CD4-positive, alpha-beta T cell (primary cell): ENCODE measurements at regions of chr11 and their contacts with region 1.

Region 1: DNA sequence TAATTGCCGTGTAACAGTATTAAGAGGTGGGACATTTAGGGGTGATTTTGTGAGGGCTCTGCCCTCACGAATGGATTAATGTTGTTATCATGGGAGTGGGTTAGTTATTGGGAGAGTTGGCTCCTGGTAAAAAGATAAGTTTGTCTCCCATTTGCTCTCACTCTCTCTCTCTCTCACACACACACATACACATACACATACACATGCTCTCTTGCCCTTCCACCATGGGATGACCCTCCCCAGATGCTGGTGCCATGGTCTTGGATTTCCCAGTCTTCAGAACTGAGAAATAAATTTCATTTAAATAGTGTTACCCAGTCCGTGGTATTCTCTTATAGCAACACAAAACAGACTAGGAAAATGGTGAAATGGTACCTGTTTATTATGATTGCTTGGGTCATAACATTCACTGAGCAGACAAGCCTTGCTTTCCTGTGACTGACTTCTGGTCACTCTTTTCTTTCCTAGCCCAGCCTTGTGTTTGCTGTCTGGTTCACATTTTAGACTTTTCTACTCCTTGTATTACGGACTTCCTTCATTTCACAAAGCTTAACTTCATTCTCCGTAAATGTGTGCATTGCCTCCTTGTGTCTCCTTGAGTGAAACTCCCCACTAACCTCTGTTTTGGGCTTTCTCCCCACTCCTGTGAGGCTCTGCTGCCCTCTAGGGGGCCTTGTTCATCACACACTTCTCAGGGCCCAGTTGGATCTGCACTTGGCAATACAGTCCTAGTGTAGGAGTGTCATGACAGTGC is 206.5 kb upstream of the CTSC start:
- DNase-seq: peak; percentile 59 to 84 (median 67)
- ATAC-seq: peak; percentile 96
- H3K4me3 ChIP-seq: no peak overlapping the region
- H3K4me3 Mint-ChIP-seq: no peak overlapping the region
- H3K27ac ChIP-seq: no peak overlapping the region
- H3K27ac Mint-ChIP-seq: no peak overlapping the region
- H3K4me1 ChIP-seq: peaks cover 5% of the 10 kb centered on the region
- H3K4me1 Mint-ChIP-seq: peaks cover 5% of the 10 kb centered on the region
- H3K27me3 ChIP-seq: no peaks in the 10 kb centered on the region
- H3K27me3 Mint-ChIP-seq: no peaks in the 10 kb centered on the region
- CTCF ChIP-seq: peak; percentile 98

Region 2: DNA sequence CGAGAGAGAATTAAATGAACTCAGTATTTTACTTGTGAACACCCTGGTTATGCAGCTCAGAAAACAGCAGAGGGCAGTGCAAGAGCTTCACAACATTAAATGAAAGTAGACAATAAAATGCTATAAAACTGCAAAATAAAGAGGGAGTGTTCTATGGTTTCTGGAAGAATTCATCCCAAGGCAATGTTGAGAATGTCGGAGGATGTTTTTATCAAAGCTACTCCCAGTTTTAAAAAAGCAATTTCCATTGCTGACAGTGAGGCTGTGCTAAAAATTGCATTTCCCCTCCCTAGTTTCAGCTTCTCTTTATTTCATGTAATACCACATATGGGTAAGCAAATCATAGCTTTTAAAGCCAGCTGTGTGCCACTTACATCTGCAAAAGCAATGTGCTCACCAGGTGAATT is 665.7 kb before region 1 on chr11:
- CTCF ChIA-PET with region 1: no interaction called
- POLR2A ChIA-PET with region 1: no interaction called
- intact Hi-C with region 1: loop called (anchors 2 to 5 kb)
- DNase-seq: peak in 1 of 14 experiments; percentile 6
- ATAC-seq: no peak
- H3K4me3 ChIP-seq: no peak overlapping the region
- H3K4me3 Mint-ChIP-seq: no peak overlapping the region
- H3K27ac ChIP-seq: no peak overlapping the region
- H3K27ac Mint-ChIP-seq: no peak overlapping the region
- H3K4me1 ChIP-seq: no peaks in the 10 kb centered on the region
- H3K4me1 Mint-ChIP-seq: no peaks in the 10 kb centered on the region
- H3K27me3 ChIP-seq: no peaks in the 10 kb centered on the region
- H3K27me3 Mint-ChIP-seq: no peaks in the 10 kb centered on the region
- CTCF ChIP-seq: no peak

Region 3: GRCh38 chr11:88103337-88104206 is 440.5 kb before region 1 on chr11:
- CTCF ChIA-PET with region 1: interaction called, 3 read pairs
- POLR2A ChIA-PET with region 1: no interaction called
- intact Hi-C with region 1: loop called (anchors 1 kb)
- DNase-seq: peak in 7 of 14 experiments; percentile 0 to 61 (median 11)
- ATAC-seq: no peak
- H3K4me3 ChIP-seq: no peak overlapping the region
- H3K4me3 Mint-ChIP-seq: no peak overlapping the region
- H3K27ac ChIP-seq: no peak overlapping the region
- H3K27ac Mint-ChIP-seq: no peak overlapping the region
- H3K4me1 ChIP-seq: no peaks in the 10 kb centered on the region
- H3K4me1 Mint-ChIP-seq: no peaks in the 10 kb centered on the region
- H3K27me3 ChIP-seq: no peaks in the 10 kb centered on the region
- H3K27me3 Mint-ChIP-seq: no peaks in the 10 kb centered on the region
- CTCF ChIP-seq: peak; percentile 42

Region 4: DNA sequence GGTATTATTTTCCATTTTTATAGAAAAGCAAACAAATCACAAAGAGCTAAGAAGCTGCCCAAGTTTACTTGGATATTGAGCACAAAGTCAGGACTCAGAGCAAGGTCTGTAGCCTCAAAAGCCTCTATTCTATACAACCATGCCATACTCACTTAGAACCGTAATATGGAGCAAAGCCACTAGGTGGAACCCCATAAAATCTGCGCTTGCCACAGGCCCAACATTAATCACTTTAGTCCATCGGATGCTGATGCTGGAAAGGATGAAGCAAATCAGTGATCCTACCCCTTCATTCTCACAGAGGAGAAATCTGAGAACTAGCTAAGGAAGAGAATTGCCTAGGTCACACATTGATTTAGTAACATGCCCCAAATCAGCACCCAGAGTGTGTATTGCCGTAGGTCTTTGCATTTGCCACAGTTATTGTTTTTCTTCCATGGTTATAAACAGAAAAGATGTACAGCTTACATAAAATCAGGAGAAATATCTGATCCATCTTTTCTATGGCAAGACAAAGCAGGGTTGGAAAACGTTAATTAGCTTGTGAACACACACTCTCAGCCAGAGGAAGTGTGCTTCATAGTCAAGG is 312.1 kb before region 1 on chr11:
- CTCF ChIA-PET with region 1: no interaction called
- POLR2A ChIA-PET with region 1: no interaction called
- intact Hi-C with region 1: loop called (anchors 1 to 2 kb)
- DNase-seq: peak in 4 of 14 experiments; percentile 9 to 57 (median 37)
- ATAC-seq: peak; percentile 60
- H3K4me3 ChIP-seq: no peak overlapping the region
- H3K4me3 Mint-ChIP-seq: no peak overlapping the region
- H3K27ac ChIP-seq: no peak overlapping the region
- H3K27ac Mint-ChIP-seq: no peak overlapping the region
- H3K4me1 ChIP-seq: no peaks in the 10 kb centered on the region
- H3K4me1 Mint-ChIP-seq: no peaks in the 10 kb centered on the region
- H3K27me3 ChIP-seq: no peaks in the 10 kb centered on the region
- H3K27me3 Mint-ChIP-seq: no peaks in the 10 kb centered on the region
- CTCF ChIP-seq: peak; percentile 72